CD8-positive, alpha-beta T cell (primary cell): ENCODE measurements at regions of chr12 and their contacts with region 1.

Region 1: DNA sequence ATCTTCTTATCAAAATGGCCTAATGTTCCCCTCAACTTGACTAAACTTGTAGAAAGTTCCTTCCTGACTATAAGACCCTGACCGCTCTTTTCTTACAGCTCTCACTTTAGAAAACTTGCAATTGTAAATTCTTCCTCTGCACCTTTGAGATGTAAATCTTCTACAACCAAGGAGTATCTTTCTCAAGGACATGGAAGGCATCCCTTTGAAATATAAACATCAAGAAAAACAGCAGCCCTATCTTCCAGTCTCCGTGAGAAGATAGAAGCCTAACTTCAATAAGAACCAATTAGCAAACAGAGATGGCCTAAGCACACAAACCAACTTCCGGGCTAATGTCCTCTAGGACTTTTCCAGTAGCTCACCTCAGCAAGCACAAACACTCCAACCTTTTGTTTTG is 210.3 kb downstream of the CPNE8 start:
- DNase-seq: no peak
- ATAC-seq: no peak
- H3K4me3 ChIP-seq: no peak overlapping the region
- H3K4me3 Mint-ChIP-seq: no peak overlapping the region
- H3K27ac ChIP-seq: no peak overlapping the region
- H3K27ac Mint-ChIP-seq: no peak overlapping the region
- H3K4me1 ChIP-seq: no peaks in the 10 kb centered on the region
- H3K4me1 Mint-ChIP-seq: no peaks in the 10 kb centered on the region
- H3K27me3 ChIP-seq: no peaks in the 10 kb centered on the region
- H3K27me3 Mint-ChIP-seq: no peaks in the 10 kb centered on the region
- CTCF ChIP-seq: no peak

Region 2: DNA sequence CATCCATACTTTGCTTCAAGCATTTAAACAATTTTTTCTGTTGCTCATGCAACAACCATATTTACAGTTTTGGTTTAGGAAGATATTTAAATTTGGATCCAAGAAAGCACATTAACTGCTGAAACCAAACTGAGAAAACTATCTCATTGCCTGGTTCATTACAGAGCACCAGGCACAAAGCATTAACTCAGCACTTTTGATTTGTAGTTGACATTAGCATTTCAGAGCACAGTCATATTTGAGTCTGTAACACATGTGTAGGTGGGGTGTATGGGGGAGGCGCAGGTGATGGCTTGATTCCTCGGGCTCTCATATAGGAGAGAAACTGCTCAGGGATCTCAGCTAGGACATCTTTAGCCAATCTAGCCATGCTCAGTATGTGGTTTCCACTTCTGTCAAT is 41.4 kb before region 1 on chr12:
- CTCF ChIA-PET with region 1: no interaction called
- POLR2A ChIA-PET with region 1: no interaction called
- intact Hi-C with region 1: loop called in 1 of 2 experiments (anchors 5 kb)
- DNase-seq: no peak
- ATAC-seq: no peak
- H3K4me3 ChIP-seq: no peak overlapping the region
- H3K4me3 Mint-ChIP-seq: no peak overlapping the region
- H3K27ac ChIP-seq: no peak overlapping the region
- H3K27ac Mint-ChIP-seq: no peak overlapping the region
- H3K4me1 ChIP-seq: no peaks in the 10 kb centered on the region
- H3K4me1 Mint-ChIP-seq: no peaks in the 10 kb centered on the region
- H3K27me3 ChIP-seq: no peaks in the 10 kb centered on the region
- H3K27me3 Mint-ChIP-seq: no peaks in the 10 kb centered on the region
- CTCF ChIP-seq: no peak